ENCODE measurements at regions of chr20 and their contacts with region 1.

Region 1: GRCh38 chr20:5996765-5997164 is 46.3 kb downstream of the MCM8 start:
- DNase-seq: no peak
- ATAC-seq: no peak
- H3K4me3 ChIP-seq: no peak overlapping the region
- H3K27ac ChIP-seq: no peak overlapping the region
- H3K4me1 ChIP-seq: no peaks in the 10 kb centered on the region
- H3K27me3 ChIP-seq: no peaks in the 10 kb centered on the region
- CTCF ChIP-seq: no peak

Region 2: GRCh38 chr20:5569021-5569420 is 427.7 kb before region 1 on chr20:
- CTCF ChIA-PET with region 1: no interaction called
- POLR2A ChIA-PET with region 1: no interaction called
- in situ Hi-C with region 1: no loop called
- intact Hi-C with region 1: no loop called
- DNase-seq: peak; percentile 22
- ATAC-seq: peak; percentile 92
- H3K4me3 ChIP-seq: no peak overlapping the region
- H3K27ac ChIP-seq: no peak overlapping the region
- H3K4me1 ChIP-seq: no peaks in the 10 kb centered on the region
- H3K27me3 ChIP-seq: no peaks in the 10 kb centered on the region
- CTCF ChIP-seq: peak; percentile 68; the same call in 1 of the 2 replicates

Region 3: DNA sequence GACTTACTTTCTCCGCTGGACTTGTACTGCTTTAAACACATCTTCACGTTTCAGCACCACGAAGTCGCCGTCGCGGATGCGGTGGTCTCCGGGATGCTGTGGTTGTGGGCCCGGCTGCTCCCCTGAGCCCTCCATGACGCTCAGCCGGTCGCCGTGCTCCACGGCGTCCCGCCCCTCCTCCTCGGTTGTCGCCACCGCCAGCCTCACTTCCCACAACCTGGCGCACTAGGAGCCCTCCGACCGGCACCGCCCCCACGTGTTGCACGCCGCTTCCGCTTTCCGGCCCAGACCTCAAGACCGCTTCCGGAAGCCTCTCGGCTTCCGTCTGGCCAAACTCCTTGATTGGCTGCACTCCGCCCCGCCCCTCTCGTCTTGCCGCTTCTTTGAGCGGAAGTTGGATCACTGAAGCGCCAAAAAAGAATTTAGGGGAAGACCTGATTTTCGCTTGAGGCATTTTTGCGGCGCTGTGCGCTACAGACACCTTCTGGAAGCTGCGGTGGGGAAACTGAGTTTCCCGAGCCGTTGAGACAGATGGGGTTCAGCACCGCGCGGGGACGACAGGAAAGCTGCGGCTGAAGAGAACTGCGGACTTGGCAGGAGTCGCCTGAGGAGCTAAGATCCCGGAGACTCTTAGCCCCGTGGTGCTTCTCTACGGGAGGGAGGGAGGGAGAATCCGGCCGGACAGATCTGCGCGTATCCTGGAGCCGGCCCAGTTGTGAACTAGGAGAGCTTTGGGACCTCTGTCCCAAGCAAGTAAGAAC is 46.3 kb before region 1 on chr20 and contains the starts of genes MCM8 and TRMT6:
- CTCF ChIA-PET with region 1: interaction called, 16 read pairs
- POLR2A ChIA-PET with region 1: no interaction called
- in situ Hi-C with region 1: no loop called
- intact Hi-C with region 1: no loop called
- DNase-seq: peak; percentile 82
- ATAC-seq: peak; percentile 99
- H3K4me3 ChIP-seq: peak within 1 kb of the TSS; percentile 99 to 100
- H3K27ac ChIP-seq: peak within 1 kb of the TSS; percentile 95
- H3K4me1 ChIP-seq: peaks cover 7% of the 10 kb centered on the region; the same call in 1 of the 2 replicates
- H3K27me3 ChIP-seq: no peaks in the 10 kb centered on the region
- CTCF ChIP-seq: no peak
- total RNA-seq, gene MCM8: 28.3 TPM
- total RNA-seq, gene TRMT6: 27.9 TPM

Region 4: GRCh38 chr20:5973172-5973571 is 23.6 kb before region 1 on chr20:
- CTCF ChIA-PET with region 1: no interaction called
- POLR2A ChIA-PET with region 1: no interaction called
- in situ Hi-C with region 1: no loop called
- intact Hi-C with region 1: no loop called
- DNase-seq: no peak
- ATAC-seq: no peak
- H3K4me3 ChIP-seq: no peak overlapping the region
- H3K27ac ChIP-seq: no peak overlapping the region
- H3K4me1 ChIP-seq: no peaks in the 10 kb centered on the region
- H3K27me3 ChIP-seq: no peaks in the 10 kb centered on the region
- CTCF ChIP-seq: no peak

Measured in Panc1 (cell line).